ENCODE measurements at regions of chr6 and their contacts with region 1.

Region 1: DNA sequence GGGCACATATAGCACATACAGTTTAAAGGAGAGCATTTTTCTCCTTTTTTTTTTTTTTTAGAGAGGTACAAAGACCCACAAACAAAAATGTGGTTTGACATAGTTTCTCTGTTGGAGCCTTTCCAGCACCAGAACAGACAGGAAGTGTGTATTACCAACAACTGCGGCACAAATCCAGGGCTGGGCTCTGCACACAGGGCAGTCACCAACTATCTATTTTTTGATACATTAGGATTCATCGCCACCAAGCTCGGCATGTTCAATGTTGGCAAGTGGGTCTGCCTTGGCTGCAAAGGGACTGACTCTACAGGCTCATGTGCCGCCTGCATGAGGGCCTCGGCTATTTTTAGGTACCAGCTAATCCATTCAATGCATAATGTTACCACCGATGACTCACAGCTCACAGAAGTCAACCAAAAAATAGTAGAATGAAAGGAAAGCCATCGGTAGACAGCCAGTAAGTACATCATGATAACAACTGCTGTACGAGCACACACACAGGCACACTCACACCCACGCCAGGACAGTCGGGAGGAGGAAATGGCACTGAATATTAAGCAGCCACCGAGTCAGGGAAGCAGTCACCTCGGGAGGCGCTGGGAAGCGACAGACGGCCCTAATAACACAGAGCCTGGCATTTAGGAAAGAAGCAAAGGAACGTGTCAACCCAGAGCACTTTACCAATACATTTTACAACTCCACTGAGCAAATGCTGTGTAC is 81.6 kb downstream of the GMPR start:
- DNase-seq: peak; percentile 81
- H3K4me3 Mint-ChIP-seq: peak overlapping the region; percentile 50
- H3K27ac Mint-ChIP-seq: peak overlapping the region; percentile 84
- H3K4me1 Mint-ChIP-seq: peaks cover 82% of the 10 kb centered on the region
- H3K27me3 Mint-ChIP-seq: no peaks in the 10 kb centered on the region

Region 2: DNA sequence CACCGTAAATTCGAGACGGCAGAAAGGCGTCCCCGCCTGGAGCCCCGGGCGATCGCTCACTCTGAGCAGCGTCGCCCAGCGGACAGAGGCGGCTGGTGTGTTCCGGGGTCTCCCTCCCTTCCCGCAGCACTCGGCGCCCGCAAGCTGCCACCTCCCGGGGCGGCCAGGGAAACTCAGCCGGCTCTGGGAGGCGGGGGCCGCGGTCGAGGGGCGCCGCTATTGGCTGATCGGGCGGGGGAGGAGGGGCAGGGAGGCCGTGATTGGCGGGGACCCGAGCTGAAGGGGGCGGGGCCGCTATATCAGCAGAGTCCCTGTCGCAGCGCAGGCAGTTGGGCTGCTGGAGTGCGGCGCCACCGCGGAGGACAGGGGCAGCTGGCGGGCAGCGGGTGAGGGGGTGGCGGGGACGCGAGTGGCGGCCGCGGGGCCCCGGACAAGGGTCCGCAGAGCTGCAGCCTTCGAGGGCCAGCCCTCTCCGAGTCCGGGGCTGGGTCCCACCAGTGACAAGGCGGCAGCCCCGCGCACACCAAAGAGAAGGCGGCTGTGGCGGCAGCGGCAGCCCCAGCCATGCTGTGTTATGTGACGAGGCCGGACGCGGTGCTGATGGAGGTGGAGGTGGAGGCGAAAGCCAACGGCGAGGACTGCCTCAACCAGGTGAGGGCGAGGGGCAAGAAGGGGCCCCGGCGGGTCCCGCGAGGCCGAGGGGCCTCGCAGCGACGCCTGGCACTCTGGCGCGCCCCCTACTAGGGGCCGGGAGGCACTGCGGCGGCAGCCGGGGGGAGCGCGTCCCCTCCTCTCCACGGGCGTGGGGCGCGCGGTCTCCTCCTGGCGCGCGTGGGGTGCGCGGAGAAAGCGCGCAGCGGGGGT is 191.0 kb before region 1 on chr6 and contains the start of gene MYLIP:
- CTCF ChIA-PET with region 1: no interaction called
- POLR2A ChIA-PET with region 1: interaction called, 4 read pairs
- intact Hi-C with region 1: loop called (anchors 2 kb)
- DNase-seq: peak; percentile 98
- H3K4me3 Mint-ChIP-seq: peak within 1 kb of the TSS; percentile 93
- H3K27ac Mint-ChIP-seq: peak within 1 kb of the TSS; percentile 94
- H3K4me1 Mint-ChIP-seq: peaks cover 28% of the 10 kb centered on the region
- H3K27me3 Mint-ChIP-seq: no peaks in the 10 kb centered on the region
- total RNA-seq, gene MYLIP: 11.4 TPM

Region 3: DNA sequence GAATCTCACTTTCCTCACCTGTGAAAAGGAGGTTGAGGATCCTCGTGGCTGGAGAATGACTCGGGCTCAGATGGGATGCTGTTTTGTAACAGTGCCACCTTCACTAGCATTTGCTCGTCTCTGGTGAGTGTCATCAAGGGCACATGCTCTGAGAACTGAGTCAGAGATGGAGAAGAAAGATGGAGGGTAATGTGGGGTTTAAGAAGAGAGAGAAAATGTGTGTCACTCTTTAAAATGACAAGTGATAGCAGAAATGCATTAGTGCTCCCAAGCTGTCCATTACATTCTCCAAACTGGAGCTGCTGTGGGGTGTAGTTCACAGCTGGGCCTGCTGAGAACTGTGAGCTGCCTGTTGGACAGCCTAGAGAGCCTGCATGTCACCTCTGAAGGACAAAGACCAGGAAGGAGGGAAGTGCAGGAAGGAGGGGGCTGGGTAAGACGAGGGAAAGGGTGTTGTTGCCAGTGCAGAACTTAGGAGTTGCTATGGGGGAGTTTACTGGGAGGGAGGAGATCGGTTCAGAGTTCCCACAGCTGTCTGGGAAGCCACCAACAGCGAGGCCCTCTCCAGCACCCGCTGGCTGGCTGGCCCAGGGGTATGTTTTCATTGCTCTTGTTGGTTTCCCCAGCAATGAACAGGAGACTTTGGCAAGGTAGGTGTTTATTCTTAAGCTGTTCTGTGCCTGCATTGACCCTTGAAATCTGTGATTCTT is 61.8 kb before region 1 on chr6:
- CTCF ChIA-PET with region 1: no interaction called
- POLR2A ChIA-PET with region 1: no interaction called
- intact Hi-C with region 1: no loop called
- DNase-seq: no peak
- H3K4me3 Mint-ChIP-seq: no peak overlapping the region
- H3K27ac Mint-ChIP-seq: no peak overlapping the region
- H3K4me1 Mint-ChIP-seq: no peaks in the 10 kb centered on the region
- H3K27me3 Mint-ChIP-seq: peaks cover 4% of the 10 kb centered on the region

Region 4: GRCh38 chr6:16409531-16410441 is 89.8 kb after region 1 on chr6:
- CTCF ChIA-PET with region 1: interaction called, 4 read pairs
- POLR2A ChIA-PET with region 1: interaction called, 4 read pairs
- intact Hi-C with region 1: loop called (anchors 1 kb)
- DNase-seq: peak; percentile 82
- H3K4me3 Mint-ChIP-seq: peak overlapping the region; percentile 71
- H3K27ac Mint-ChIP-seq: peak overlapping the region; percentile 81
- H3K4me1 Mint-ChIP-seq: peaks cover 66% of the 10 kb centered on the region
- H3K27me3 Mint-ChIP-seq: no peaks in the 10 kb centered on the region

Region 5: DNA sequence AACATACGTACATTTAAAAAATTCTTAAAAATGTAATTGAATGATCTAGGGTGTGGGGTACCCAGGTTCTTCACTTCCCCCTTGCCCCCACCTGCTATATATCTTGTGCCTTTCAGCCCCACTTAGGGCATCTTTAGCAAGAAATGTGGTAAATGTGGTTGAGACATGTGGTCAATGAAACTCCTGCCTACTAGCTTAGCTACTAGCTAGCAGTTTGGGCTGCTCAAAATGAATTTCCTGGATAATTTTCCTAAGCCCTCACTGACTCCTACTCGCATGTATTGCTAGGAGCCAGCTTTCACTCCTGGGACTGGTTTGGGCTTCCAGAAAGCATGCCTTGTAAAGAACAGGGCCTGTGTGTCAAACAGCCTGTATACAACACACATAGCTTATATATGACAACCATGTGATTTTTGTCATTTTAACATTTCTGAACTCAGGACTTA is 184.0 kb after region 1 on chr6:
- CTCF ChIA-PET with region 1: no interaction called
- POLR2A ChIA-PET with region 1: no interaction called
- intact Hi-C with region 1: no loop called
- DNase-seq: no peak
- H3K4me3 Mint-ChIP-seq: no peak overlapping the region
- H3K27ac Mint-ChIP-seq: no peak overlapping the region
- H3K4me1 Mint-ChIP-seq: peaks cover 47% of the 10 kb centered on the region
- H3K27me3 Mint-ChIP-seq: no peaks in the 10 kb centered on the region

Region 6: DNA sequence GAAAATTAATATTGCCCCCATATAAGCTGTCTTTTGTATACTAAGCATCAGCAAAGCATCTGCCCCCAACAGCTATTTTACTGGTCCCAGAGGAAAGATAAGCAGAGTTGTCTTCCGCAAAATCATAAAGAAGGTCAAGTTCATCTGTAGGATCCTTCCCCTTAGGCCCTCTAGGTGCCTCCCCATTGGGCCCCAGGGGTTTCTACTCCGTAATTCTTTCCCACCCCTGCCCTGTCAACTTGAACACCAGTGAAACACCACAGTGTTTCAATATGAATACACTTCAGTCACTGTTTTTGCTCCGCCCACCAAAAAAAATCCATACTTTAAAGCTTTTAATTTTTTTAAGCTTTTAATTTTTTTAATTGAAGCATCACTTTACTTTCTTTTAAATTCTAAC is 282.1 kb after region 1 on chr6:
- CTCF ChIA-PET with region 1: no interaction called
- POLR2A ChIA-PET with region 1: no interaction called
- intact Hi-C with region 1: loop called (anchors 5 kb)
- DNase-seq: peak; percentile 83
- H3K4me3 Mint-ChIP-seq: no peak overlapping the region
- H3K27ac Mint-ChIP-seq: peak overlapping the region; percentile 3
- H3K4me1 Mint-ChIP-seq: peaks cover 47% of the 10 kb centered on the region
- H3K27me3 Mint-ChIP-seq: no peaks in the 10 kb centered on the region

Region 7: DNA sequence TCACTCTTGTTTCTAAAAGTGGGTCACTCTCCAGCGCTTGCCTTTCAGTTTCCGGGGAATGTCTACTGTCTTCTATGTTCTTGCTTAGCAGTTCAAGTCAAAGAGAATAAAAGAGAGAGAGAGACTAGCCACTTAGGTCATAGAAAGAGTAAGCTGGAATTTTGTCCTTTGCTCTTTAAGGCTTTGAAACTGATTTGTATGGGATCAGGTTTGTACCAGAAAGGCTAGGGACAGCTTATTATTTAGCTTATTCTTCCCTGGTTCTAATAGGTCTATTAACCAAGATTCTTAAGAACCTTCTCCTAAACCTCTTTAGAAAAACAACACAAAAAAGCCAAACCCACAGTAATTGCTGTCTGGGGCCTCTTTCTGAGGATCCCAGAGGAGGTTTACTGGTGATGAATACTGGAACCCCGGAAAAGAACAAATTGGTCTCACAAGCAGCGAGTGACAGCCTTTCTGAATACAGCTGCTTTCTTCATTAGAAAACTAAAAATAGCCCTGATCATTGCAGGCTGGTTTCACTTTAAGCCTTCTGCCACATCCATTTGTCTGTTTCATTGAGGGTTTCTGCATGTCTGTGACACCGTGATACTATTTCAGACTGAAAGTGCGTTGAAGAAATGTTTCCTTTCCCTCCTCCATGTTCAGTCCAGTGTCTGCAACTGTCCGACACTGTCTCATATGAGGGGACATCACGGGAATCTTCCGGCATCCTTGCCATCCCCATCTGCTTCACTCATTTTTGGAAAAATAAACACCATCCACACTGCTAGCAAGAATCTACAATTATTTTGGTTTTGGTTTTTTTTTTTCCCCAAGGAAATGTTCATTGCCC is 516.4 kb after region 1 on chr6:
- CTCF ChIA-PET with region 1: no interaction called
- POLR2A ChIA-PET with region 1: no interaction called
- intact Hi-C with region 1: loop called (anchors 5 kb)
- DNase-seq: peak; percentile 25
- H3K4me3 Mint-ChIP-seq: peak overlapping the region; percentile 66
- H3K27ac Mint-ChIP-seq: peak overlapping the region; percentile 83
- H3K4me1 Mint-ChIP-seq: peaks cover 38% of the 10 kb centered on the region
- H3K27me3 Mint-ChIP-seq: peaks cover 4% of the 10 kb centered on the region